Activated CD4-positive, alpha-beta memory T cell treated with anti-CD3 and anti-CD28 coated beads for 36 hours (primary cell): ENCODE measurements at regions of chr4 and their contacts with region 1.

Region 1: GRCh38 chr4:173318648-173319211 is 15.4 kb downstream of the HMGB2 start:
- DNase-seq: no peak
- H3K4me3 Mint-ChIP-seq: no peak overlapping the region
- H3K27ac Mint-ChIP-seq: no peak overlapping the region
- H3K4me1 Mint-ChIP-seq: peaks cover 12% of the 10 kb centered on the region
- H3K27me3 Mint-ChIP-seq: no peaks in the 10 kb centered on the region

Region 2: GRCh38 chr4:173288296-173288695 is 30.4 kb before region 1 on chr4:
- CTCF ChIA-PET with region 1: interaction called, 9 read pairs
- POLR2A ChIA-PET with region 1: no interaction called
- intact Hi-C with region 1: loop called (anchors 1 kb)
- DNase-seq: peak; percentile 76
- H3K4me3 Mint-ChIP-seq: no peak overlapping the region
- H3K27ac Mint-ChIP-seq: no peak overlapping the region
- H3K4me1 Mint-ChIP-seq: peaks cover 13% of the 10 kb centered on the region
- H3K27me3 Mint-ChIP-seq: no peaks in the 10 kb centered on the region

Region 3: GRCh38 chr4:173334085-173334772 is 15.5 kb after region 1 on chr4 and contains the start of gene HMGB2:
- CTCF ChIA-PET with region 1: interaction called, 10 read pairs
- POLR2A ChIA-PET with region 1: interaction called, 3 read pairs
- intact Hi-C with region 1: loop called (anchors 1 kb)
- DNase-seq: peak; percentile 100
- H3K4me3 Mint-ChIP-seq: peak within 1 kb of the TSS; percentile 95
- H3K27ac Mint-ChIP-seq: peak within 1 kb of the TSS; percentile 100
- H3K4me1 Mint-ChIP-seq: peaks cover 11% of the 10 kb centered on the region
- H3K27me3 Mint-ChIP-seq: peaks cover 4% of the 10 kb centered on the region
- total RNA-seq, gene HMGB2: 610 to 614 TPM

Region 4: GRCh38 chr4:173420324-173420752 is 101.6 kb after region 1 on chr4:
- CTCF ChIA-PET with region 1: interaction called, 150 read pairs
- POLR2A ChIA-PET with region 1: no interaction called
- intact Hi-C with region 1: loop called (anchors 1 kb)
- DNase-seq: no peak
- H3K4me3 Mint-ChIP-seq: no peak overlapping the region
- H3K27ac Mint-ChIP-seq: no peak overlapping the region
- H3K4me1 Mint-ChIP-seq: peaks cover 8% of the 10 kb centered on the region
- H3K27me3 Mint-ChIP-seq: no peaks in the 10 kb centered on the region

Region 5: DNA sequence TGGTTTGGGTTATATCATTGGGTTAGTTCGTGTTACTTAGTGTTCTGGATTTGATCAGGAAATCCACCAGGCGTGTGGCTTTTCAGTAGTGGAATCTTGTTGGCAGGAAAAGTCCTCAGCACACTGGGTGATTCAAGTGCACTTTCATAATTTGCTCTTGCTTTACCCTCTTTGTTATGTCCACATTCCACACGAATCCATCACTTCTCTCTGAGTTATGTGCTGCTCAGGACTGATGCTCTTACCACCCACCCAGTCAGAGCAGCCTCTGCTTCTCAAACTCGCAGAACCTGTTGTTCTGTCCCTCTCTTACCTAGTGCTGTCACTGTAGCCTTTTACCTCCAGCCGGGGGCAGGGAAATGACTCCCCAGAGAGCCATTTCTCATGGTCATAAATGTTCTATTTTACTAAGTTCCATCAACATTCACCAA is 117.4 kb after region 1 on chr4:
- CTCF ChIA-PET with region 1: no interaction called
- POLR2A ChIA-PET with region 1: no interaction called
- intact Hi-C with region 1: no loop called
- DNase-seq: no peak
- H3K4me3 Mint-ChIP-seq: no peak overlapping the region
- H3K27ac Mint-ChIP-seq: no peak overlapping the region
- H3K4me1 Mint-ChIP-seq: peaks cover 7% of the 10 kb centered on the region
- H3K27me3 Mint-ChIP-seq: no peaks in the 10 kb centered on the region

Region 6: DNA sequence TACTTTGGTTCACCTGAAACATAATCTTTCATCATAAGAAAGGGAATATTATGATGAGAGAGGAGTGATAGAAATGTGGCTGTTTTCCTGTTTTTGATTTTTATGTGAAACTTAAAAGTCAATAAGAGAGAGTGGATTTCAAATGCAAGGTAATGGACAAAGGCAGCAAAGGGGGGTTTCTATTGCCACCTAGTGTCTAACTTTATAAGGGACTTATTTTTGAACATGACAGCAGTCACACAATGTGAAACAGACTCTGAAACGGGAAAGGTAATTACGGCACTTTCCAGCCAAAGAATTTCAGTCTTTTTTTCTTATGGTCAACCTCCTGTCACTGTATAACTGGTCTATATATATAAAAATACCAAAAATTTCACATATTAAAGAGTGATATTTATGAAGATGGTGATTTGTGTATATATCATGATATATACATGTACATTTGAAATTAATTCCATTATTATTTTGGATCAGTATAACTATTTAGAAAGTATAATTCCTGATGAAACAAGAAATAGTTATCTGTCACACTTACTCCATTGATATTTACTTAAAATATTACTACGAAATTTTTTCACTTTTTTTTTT is 837.6 kb after region 1 on chr4:
- CTCF ChIA-PET with region 1: no interaction called
- POLR2A ChIA-PET with region 1: no interaction called
- intact Hi-C with region 1: loop called (anchors 5 kb)
- DNase-seq: no peak
- H3K4me3 Mint-ChIP-seq: no peak overlapping the region
- H3K27ac Mint-ChIP-seq: no peak overlapping the region
- H3K4me1 Mint-ChIP-seq: no peaks in the 10 kb centered on the region
- H3K27me3 Mint-ChIP-seq: peaks cover 11% of the 10 kb centered on the region